Activated T-helper 2 cell treated with anti-CD3 and anti-CD28 coated beads, Interferon-gamma antibody, Interleukin-2, Interleukin-4, amounts not matched to agents 10 μg/mL and 5 μg/mL and 100 μg/mL, durations not matched to agents 14 hours and 24 hours and 36 hours (primary cell): ENCODE measurements at regions of chr22 and their contacts with region 1.

Region 1: DNA sequence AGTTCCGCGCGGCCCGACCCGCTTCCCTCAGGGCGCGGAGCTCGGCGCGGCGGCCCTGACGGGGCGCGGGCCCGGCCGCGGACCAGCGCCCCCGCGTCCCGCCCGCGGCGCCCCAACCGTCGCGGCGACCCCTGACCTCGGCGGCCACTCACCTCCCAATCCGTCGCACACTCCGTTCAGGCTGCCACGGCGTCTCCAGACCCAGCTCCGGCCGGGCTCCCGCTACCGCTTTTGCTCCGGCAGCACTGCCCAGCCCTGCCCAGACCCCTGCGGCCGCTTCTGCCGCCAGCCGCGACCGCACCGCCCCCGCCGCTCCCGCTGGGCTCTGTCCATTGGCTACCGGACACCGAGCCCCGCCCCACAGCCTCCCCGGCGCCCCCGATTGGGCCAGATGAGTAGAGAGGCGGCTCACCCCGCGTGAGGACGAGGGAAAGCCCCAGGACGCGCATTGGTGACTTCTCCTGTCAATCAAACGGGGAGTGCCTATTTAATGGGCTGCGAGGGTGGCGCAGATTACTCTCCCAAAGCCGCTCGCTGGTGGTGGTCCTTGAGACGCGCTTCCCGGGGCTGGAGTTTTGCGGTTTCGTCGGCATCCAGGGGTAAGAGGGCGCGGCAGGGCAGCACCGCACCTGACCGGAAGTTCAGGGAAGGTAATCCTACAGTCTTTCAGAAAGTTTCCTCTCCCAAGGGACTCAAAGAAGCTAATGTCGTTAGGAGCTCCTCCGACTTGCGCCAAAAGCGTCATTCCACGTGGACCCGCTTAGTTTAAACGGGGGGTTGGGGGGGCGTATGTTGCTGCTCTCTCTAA is at the start of gene PACSIN2:
- DNase-seq: peak; percentile 99
- H3K4me3 Mint-ChIP-seq: peak within 1 kb of the TSS; percentile 91
- H3K27ac Mint-ChIP-seq: peak within 1 kb of the TSS; percentile 76
- H3K4me1 Mint-ChIP-seq: peaks cover 23% of the 10 kb centered on the region
- H3K27me3 Mint-ChIP-seq: peaks cover 6% of the 10 kb centered on the region
- total RNA-seq, gene PACSIN2: 30.8 and 32.5 TPM in 2 replicates

Region 2: DNA sequence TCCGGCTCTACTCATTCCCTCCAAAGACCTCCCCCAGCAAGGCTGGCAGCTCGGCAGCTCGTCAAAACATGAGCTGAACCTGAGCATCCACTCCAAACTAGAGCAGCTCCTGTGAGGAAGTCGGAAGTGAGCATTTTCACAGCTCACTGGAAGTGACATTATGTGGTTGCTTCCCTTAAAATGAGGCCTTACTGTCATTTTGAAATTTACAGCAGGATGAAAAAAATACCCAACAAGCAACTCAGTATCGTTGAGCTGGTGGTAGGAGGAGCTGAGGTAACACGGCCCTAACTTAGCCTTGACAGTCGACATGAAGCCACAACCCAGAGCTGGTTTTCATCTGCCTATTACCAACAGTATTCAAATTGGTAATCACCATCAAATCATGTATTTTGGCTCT is 120.0 kb before region 1 on chr22:
- intact Hi-C with region 1: loop called (anchors 10 kb)
- DNase-seq: no peak
- H3K4me3 Mint-ChIP-seq: no peak overlapping the region
- H3K27ac Mint-ChIP-seq: peak overlapping the region; percentile 78
- H3K4me1 Mint-ChIP-seq: peaks cover 32% of the 10 kb centered on the region
- H3K27me3 Mint-ChIP-seq: no peaks in the 10 kb centered on the region

Region 3: GRCh38 chr22:43042101-43042780 is 27.2 kb after region 1 on chr22:
- intact Hi-C with region 1: no loop called
- DNase-seq: no peak
- H3K4me3 Mint-ChIP-seq: no peak overlapping the region
- H3K27ac Mint-ChIP-seq: no peak overlapping the region
- H3K4me1 Mint-ChIP-seq: no peaks in the 10 kb centered on the region
- H3K27me3 Mint-ChIP-seq: no peaks in the 10 kb centered on the region